Prostate gland (tissue), 2 donors: ENCODE measurements at regions of chr16 and their contacts with region 1.

Region 1: GRCh38 chr16:89749647-89750046 is 28.3 kb downstream of the ZNF276 start:
- DNase-seq: no peak
- H3K4me3 ChIP-seq: no peak overlapping the region
- H3K27ac ChIP-seq: no peak overlapping the region
- H3K4me1 ChIP-seq: no peaks in the 10 kb centered on the region
- H3K27me3 ChIP-seq: no peaks in the 10 kb centered on the region
- CTCF ChIP-seq: no peak
- POLR2A ChIP-seq: no peak

Region 2: DNA sequence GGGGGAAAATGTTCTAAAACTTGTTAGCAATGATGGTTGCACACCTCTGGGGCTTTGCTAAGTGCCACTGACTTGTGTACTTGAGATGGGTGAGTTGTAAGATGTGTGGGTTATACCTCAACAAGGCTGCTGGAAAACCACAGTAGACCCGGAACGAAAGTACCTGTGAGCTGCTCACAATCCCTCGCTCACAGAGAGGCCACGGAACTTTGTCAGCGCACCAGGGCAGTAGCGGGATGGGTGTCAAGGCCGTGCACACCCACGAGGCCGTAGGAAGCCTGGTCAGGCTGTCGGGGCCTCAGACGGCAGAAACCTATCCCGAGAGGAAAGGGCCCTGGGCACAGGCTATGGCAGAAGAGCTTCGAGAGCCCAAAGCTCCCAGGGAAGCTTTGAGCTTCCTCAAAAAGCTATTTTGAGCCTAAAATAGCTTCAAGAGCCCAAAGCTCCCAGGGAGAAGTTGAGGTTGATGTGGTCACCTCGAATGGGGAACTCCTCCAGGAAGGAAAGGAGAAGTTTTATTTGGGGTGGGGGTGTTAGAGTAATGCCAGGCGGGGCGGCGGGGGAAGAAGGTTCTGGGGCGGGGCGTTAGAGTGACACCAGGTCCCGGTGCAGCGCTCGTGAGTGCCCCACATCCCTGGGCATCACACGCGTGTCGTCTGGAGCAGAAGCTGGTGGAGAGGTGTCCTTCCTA is 791.6 kb before region 1 on chr16:
- intact Hi-C with region 1: no loop called
- DNase-seq: no peak
- H3K4me3 ChIP-seq: no peak overlapping the region
- H3K27ac ChIP-seq: no peak overlapping the region
- H3K4me1 ChIP-seq: no peaks in the 10 kb centered on the region
- H3K27me3 ChIP-seq: no peaks in the 10 kb centered on the region
- CTCF ChIP-seq: no peak
- POLR2A ChIP-seq: no peak

Region 3: DNA sequence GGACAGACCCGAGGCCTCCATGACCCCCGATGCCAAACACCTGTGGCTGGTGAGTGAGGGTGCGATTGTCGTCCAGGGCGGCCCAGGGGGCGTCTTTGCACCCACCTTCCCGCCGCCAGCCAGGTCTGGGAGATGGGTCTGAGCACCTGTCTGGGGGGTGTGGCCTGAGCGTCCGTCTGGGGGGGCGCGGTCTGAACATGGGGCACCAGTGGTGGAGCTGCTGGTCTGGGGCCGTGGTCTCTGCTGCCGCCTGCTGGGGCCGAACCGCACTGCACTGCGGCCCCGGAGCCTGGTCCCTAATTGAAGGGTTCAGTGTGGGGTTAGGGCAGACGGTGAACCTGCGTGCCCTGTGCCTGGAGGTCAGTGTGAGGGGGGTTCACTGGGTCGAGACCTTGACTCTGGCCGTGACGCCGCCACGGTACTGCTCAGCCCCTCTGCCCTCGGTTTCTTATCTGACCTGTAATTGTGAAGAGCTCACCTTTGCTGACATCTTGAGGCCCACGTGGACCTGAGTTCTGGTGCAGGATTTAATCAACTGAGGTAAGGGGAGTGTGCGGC is 111.2 kb after region 1 on chr16:
- intact Hi-C with region 1: loop called (anchors 5 kb)
- DNase-seq: peak; percentile 46
- H3K4me3 ChIP-seq: no peak overlapping the region
- H3K27ac ChIP-seq: no peak overlapping the region
- H3K4me1 ChIP-seq: no peaks in the 10 kb centered on the region
- H3K27me3 ChIP-seq: no peaks in the 10 kb centered on the region
- CTCF ChIP-seq: peak; percentile 87 to 96 (median 92)
- POLR2A ChIP-seq: no peak